BJ (cell line): ENCODE measurements at regions of chr1 and their contacts with region 1.

Region 1: GRCh38 chr1:169546087-169546995 is 39.9 kb downstream of the F5 start:
- DNase-seq: no peak
- H3K4me3 ChIP-seq: no peak overlapping the region
- H3K27me3 ChIP-seq: peaks cover 1% of the 10 kb centered on the region; the same call in 1 of the 2 replicates
- CTCF ChIP-seq: peak; percentile 83

Region 2: DNA sequence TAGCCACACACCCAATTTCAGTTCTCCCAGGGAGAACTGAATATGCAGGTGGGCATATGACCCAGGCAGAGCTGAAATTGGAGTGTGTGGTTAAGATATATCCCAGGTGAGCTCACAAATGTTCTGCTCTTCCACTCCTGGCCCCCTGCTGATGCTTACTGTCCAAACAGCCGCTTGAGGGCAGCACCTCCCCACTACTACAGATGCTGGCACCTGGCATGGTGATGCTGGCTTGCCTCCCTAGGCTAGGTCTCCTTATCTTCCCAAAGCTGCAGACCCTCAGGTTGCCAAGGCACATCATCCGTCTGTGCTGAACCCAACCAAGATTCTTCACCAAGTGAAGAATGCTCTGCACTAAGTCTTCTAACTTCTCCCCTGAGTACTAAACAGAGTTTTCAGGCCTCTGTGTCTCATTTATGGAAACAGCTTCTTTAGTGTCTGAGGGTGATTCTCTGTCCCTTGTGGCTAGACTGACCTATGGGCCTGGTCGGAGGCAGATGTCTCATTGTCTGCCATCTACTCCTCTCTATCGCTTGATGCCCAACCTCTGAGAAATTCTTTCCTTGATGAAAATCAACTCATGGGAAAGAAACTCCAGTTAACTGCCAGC is 942.7 kb before region 1 on chr1:
- CTCF ChIA-PET with region 1: interaction called, 10 read pairs
- POLR2A ChIA-PET with region 1: no interaction called
- DNase-seq: no peak
- H3K4me3 ChIP-seq: no peak overlapping the region
- H3K27me3 ChIP-seq: no peaks in the 10 kb centered on the region
- CTCF ChIP-seq: peak; percentile 81

Region 3: GRCh38 chr1:169460191-169460833 is 86.0 kb before region 1 on chr1:
- CTCF ChIA-PET with region 1: interaction called, 12 read pairs
- POLR2A ChIA-PET with region 1: no interaction called
- DNase-seq: no peak
- H3K4me3 ChIP-seq: peak overlapping the region; percentile 9
- H3K27me3 ChIP-seq: peaks cover 1% of the 10 kb centered on the region; the same call in 1 of the 2 replicates
- CTCF ChIP-seq: no peak

Region 4: GRCh38 chr1:169466259-169467230 is 79.8 kb before region 1 on chr1:
- CTCF ChIA-PET with region 1: interaction called, 12 read pairs
- POLR2A ChIA-PET with region 1: no interaction called
- DNase-seq: no peak
- H3K4me3 ChIP-seq: no peak overlapping the region
- H3K27me3 ChIP-seq: no peaks in the 10 kb centered on the region
- CTCF ChIP-seq: peak; percentile 48

Region 5: DNA sequence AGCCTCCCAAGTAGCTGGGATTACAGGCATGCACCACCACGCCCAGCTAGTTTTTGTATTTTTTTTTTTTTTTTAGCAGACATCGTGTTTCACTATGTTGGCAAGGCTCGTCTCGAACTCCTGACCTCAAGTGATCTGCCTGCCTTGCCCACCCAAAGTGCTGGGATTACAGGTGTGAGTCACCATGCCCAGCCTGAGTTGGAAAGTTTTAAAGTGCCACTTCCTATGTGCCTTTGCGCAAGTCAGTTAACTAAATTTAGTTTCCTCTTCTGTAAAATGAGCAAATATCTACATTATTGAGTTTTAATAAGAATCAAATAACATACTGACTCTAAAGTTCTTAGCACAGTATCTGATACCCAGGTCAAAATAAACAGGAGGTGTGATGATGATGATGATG is 73.0 kb before region 1 on chr1:
- CTCF ChIA-PET with region 1: interaction called, 11 read pairs
- POLR2A ChIA-PET with region 1: no interaction called
- DNase-seq: no peak
- H3K4me3 ChIP-seq: no peak overlapping the region
- H3K27me3 ChIP-seq: no peaks in the 10 kb centered on the region
- CTCF ChIP-seq: no peak